A549 (cell line): ENCODE measurements at regions of chr12 and their contacts with region 1.

Region 1: DNA sequence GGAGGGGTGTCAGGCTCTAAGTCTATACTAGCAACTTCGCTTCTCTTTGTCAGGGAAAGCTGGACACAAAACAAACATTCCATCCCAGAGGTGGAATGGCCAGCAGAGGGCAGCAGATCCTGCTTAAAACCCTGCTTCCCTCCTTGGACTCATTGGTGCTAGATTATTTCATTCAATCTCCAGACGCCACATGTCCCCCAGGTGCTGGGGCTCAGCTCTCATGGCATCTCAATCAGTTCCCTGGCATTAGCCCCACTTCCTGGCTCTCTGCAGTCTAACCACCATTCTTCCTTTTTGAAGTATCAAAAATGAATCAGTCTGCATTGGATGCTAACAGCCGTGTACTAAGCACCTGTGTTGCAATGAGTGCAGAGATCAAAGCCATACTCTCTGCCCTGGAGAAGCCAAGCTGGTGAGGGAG is 8.1 kb upstream of the PPP1R1A start:
- DNase-seq: peak; percentile 60 to 72
- ATAC-seq: peak; percentile 70 to 92
- H3K4me3 ChIP-seq: no peak overlapping the region
- H3K27ac ChIP-seq: no peak overlapping the region
- H3K4me1 ChIP-seq: no peaks in the 10 kb centered on the region
- CTCF ChIP-seq: peak; percentile 86
- EP300 ChIP-seq: no peak
- POLR2A ChIP-seq: no peak
- RAD21 ChIP-seq: peak; percentile 43 to 56; a peak in 4 of 5 replicates

Region 2: DNA sequence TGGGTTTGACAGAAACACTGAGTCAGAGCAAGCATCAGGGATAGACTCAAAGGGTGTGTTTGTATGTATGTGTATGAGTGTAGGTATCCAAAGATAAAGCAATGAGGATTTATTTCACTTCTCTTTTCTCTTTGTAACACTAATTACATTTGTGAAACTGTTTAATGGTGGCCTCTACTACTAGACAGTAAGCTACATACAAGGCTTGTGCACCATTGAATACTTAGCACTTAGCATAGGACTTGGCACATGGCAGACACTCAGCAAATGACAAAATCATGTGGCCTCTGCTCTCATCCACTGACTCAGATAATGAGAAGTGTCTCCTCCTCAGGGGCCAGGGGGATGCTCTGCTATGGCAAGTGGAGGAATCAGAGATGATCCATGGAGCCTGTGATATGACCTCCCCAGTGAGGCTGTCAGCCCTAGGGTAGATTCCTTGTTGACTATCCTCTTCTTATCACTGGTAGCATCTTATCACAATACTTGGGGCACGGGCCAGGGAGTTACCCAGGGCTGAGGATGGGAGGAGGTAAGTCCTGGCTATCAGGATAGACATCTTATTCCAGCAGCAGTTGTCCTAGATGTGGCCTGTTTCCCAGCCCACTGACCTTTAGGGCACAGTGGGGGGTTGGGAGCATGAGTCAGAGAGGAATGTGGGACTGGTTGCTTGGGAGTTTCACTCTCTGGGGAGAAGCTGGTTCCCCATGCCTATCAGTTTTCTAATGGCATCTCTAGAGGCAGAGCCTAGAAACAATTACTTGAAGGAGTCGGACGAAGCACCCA is 729.1 kb before region 1 on chr12:
- CTCF ChIA-PET with region 1: no interaction called
- POLR2A ChIA-PET with region 1: no interaction called
- DNase-seq: peak; percentile 76 to 86
- ATAC-seq: peak; percentile 52 to 80; a peak in 5 of 6 replicates
- H3K4me3 ChIP-seq: no peak overlapping the region
- H3K27ac ChIP-seq: peak overlapping the region; percentile 83 to 84
- H3K4me1 ChIP-seq: peaks cover 59% of the 10 kb centered on the region
- CTCF ChIP-seq: no peak
- EP300 ChIP-seq: no peak
- POLR2A ChIP-seq: no peak
- RAD21 ChIP-seq: peak in 1 of 2 experiments; percentile 29; a peak in 2 of 5 replicates

Region 3: DNA sequence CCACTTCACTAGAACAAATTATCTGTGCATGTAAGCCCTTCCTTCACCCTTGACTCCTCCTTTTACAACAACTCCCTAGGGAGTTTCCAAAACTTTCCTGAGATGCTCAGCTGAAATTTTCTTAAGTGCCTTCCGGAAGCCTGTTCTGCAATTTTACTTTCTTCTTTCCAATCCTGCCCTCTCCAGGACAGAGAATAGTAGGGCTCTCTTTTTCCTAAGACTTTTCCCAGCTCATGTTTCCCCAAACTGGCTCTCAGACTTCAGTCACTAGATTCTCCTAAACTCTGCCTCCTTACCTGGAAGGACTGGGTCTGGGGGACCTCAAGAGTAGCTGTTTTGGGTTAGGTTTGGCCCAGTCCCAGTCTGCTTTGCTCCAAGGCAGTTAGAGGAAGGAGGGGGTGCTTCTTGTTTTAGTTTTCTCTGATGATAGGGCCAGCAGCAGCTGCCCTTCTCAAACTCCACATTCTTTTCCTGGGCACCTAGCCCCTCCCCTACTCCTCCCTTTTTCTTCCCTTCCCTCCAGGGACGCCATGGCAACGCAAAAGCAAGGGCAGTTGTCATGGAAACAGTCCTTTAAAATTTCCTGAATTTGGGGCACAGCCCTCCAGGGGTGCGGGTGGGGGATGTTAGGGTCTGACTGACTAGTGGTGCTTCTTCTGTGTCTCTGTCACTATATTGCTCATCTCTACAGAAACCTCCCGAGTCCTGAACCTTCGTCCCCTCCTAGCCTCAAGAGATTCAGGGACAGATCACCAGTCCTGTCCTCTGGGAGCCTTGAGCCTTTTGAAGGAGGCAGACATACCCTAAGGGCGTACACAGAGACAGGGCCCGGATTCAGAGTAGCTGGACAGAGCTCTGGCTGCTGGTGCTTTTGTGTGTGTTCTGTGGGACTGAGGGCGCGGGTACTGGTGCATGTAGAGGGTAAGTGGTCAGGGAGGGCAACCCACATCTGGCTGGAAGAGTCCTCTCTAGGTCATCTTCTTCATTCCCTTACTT is 25.0 kb before region 1 on chr12:
- CTCF ChIA-PET with region 1: interaction called, 100 read pairs
- POLR2A ChIA-PET with region 1: no interaction called
- DNase-seq: no peak
- ATAC-seq: peak in 1 of 2 experiments; percentile 12; a peak in 3 of 6 replicates
- H3K4me3 ChIP-seq: no peak overlapping the region
- H3K27ac ChIP-seq: no peak overlapping the region
- H3K4me1 ChIP-seq: no peaks in the 10 kb centered on the region
- CTCF ChIP-seq: no peak
- EP300 ChIP-seq: no peak
- POLR2A ChIP-seq: no peak
- RAD21 ChIP-seq: no peak

Region 4: GRCh38 chr12:54795644-54796043 is 199.1 kb after region 1 on chr12:
- CTCF ChIA-PET with region 1: no interaction called
- POLR2A ChIA-PET with region 1: no interaction called
- DNase-seq: no peak
- ATAC-seq: no peak
- H3K4me3 ChIP-seq: no peak overlapping the region
- H3K27ac ChIP-seq: no peak overlapping the region
- H3K4me1 ChIP-seq: no peaks in the 10 kb centered on the region
- CTCF ChIP-seq: no peak
- EP300 ChIP-seq: no peak
- POLR2A ChIP-seq: no peak
- RAD21 ChIP-seq: no peak